ENCODE measurements at regions of chr14 and their contacts with region 1.

Region 1: GRCh38 chr14:34629657-34630529 is at the start of gene SNX6:
- DNase-seq: peak; percentile 66 to 79
- ATAC-seq: peak; percentile 96 to 98
- H3K4me3 ChIP-seq: peak within 1 kb of the TSS; percentile 93 to 99 (median 96)
- H3K27ac ChIP-seq: peak within 1 kb of the TSS; percentile 95 to 98 (median 98)
- H3K4me1 ChIP-seq: peaks cover 18 to 19% of the 10 kb centered on the region in 2 donors
- H3K27me3 ChIP-seq: no peaks in the 10 kb centered on the region
- CTCF ChIP-seq: no peak
- POLR2A ChIP-seq: peak; percentile 68 to 74
- total RNA-seq, gene SNX6: 73.8 to 113 (median 109) TPM

Region 2: DNA sequence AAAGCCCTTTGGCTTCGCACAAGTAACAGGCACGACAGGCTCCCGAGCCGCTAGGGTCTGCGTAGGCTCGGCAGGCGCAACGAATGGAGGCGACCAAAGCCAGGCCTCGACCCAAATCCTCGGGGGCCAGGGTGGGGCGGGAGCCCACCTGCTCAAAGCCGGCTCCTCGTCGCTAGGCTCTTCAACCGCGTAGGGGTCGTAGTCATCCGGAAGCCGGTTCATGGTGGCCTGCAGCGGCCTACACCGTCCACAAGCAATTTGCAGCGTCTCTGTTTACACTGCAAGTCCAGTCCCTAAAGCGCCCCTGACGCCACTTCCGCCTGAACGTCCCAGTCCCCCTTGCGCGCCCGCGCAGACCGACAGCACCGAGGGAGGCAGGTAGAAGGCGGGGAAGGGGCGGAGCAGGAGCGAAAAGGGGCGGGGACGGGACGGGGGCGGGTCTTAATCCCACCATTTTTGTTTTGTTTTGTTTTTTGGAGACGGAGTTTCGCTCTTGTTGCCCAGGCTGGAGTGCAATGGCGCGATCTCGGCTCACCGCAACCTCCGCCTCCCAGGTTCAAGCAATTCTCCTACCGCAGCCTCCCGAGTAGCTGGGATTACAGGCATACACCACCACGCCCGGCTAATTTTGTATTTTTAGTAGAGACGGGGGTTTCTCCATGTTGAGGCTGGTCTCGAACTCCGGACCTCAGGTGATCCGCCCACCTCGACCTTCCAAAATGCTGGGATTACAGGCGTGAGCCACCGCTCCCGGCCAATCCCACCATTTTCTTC is 90.3 kb before region 1 on chr14 and contains the start of gene EAPP:
- in situ Hi-C with region 1: no loop called
- intact Hi-C with region 1: loop called (anchors 5 kb)
- DNase-seq: peak; percentile 99
- ATAC-seq: peak; percentile 96 to 98
- H3K4me3 ChIP-seq: peak within 1 kb of the TSS; percentile 74 to 98 (median 96)
- H3K27ac ChIP-seq: peak within 1 kb of the TSS; percentile 92 to 98 (median 97)
- H3K4me1 ChIP-seq: peaks cover 18 to 19% of the 10 kb centered on the region in 2 donors
- H3K27me3 ChIP-seq: no peaks in the 10 kb centered on the region
- CTCF ChIP-seq: peak in 2 of 5 experiments; percentile 26 to 28
- POLR2A ChIP-seq: peak; percentile 90 to 96
- total RNA-seq, gene EAPP: 25.6 to 35.7 (median 28.0) TPM

Region 3: DNA sequence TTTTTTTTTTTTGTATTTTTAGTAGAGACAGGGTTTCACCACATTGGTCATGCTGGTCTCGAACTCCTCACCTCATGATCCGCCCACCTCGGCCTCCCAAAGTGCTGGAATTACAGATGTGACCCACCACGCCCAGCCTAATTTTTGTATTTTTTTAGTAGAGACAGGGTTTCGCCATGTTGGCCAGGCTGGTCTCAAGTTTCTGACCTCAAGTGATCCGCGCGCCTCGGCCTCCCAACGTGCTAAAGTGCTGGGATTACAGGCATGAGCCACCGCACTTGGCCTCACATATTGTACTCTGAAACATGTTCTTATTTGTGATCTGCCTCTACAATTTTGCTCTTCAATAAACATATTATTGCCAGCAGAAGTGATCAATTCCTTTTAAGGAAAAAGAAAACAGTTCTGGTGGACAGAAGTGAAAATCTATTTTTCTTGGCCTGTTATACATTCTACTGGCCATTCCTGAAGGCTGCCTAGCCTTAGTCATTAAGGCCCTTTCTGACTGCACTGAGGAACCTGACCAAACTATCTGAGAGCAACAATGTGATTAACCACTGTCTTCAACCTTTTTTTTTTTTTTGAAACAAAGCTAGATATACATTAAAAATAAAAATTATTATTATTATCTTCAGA is 36.0 kb before region 1 on chr14:
- in situ Hi-C with region 1: no loop called
- intact Hi-C with region 1: loop called (anchors 2 kb)
- DNase-seq: peak in 1 of 2 donors; percentile 58
- ATAC-seq: peak; percentile 20 to 48
- H3K4me3 ChIP-seq: no peak overlapping the region
- H3K27ac ChIP-seq: peak overlapping the region; percentile 69 to 84 (median 80)
- H3K4me1 ChIP-seq: peaks cover 22 to 49% of the 10 kb centered on the region in 2 donors
- H3K27me3 ChIP-seq: no peaks in the 10 kb centered on the region
- CTCF ChIP-seq: no peak
- POLR2A ChIP-seq: no peak

Region 4: DNA sequence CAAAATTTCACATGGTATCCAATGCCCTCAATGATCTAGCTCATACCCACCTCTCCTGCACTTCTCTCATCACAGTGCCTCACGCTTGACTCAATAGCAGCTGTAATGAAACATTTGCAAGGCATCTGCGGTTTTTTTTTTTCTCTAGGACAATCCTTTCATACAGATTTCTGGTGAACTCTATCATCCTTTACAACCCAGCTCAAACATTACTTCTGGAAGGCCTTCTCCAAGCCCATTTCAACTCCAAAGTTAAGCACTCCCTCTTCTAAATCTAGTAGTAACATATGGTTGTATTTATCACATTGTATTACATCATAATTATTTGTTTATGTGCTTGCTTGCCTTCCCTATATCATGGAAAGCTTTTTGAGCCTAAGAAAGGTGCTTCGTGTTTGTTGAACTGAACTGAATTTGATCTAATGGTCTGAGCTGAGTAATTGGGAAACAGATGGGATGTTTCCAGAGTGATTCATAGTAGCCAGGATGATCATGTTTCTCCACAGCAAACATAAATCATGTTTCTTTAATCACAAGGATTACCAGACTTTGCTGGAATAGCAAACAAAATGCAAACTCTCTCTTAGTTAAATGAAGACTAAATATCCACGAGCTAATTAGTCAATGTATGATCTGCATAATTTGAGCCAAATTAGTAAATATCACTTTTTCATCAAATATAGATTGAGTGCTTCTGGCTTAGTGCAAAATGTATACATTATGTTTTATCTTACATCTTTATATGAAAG is 70.2 kb after region 1 on chr14:
- in situ Hi-C with region 1: no loop called
- intact Hi-C with region 1: no loop called
- DNase-seq: no peak
- ATAC-seq: peak; percentile 97 to 99
- H3K4me3 ChIP-seq: no peak overlapping the region
- H3K27ac ChIP-seq: peak overlapping the region; percentile 77 to 83 (median 80)
- H3K4me1 ChIP-seq: peaks cover 22 to 30% of the 10 kb centered on the region in 2 donors
- H3K27me3 ChIP-seq: no peaks in the 10 kb centered on the region
- CTCF ChIP-seq: no peak
- POLR2A ChIP-seq: no peak

Region 5: GRCh38 chr14:34875031-34875922 is 245.4 kb after region 1 on chr14 and contains the start of gene BAZ1A:
- in situ Hi-C with region 1: no loop called
- intact Hi-C with region 1: loop called (anchors 5 kb)
- DNase-seq: peak; percentile 42 to 61
- ATAC-seq: peak; percentile 62
- H3K4me3 ChIP-seq: peak within 1 kb of the TSS; percentile 82 to 98 (median 90)
- H3K27ac ChIP-seq: peak within 1 kb of the TSS; percentile 98 to 100 (median 100)
- H3K4me1 ChIP-seq: peaks cover 16 to 17% of the 10 kb centered on the region in 2 donors
- H3K27me3 ChIP-seq: no peaks in the 10 kb centered on the region
- CTCF ChIP-seq: peak in 3 of 5 experiments; percentile 13 to 42 (median 37)
- POLR2A ChIP-seq: peak; percentile 84 to 95
- total RNA-seq, gene BAZ1A: 11.6 to 18.5 (median 14.7) TPM